Activated CD4-positive, alpha-beta T cell treated with anti-CD3 and anti-CD28 coated beads for 36 hours (primary cell): ENCODE measurements at regions of chr12 and their contacts with region 1.

Region 1: DNA sequence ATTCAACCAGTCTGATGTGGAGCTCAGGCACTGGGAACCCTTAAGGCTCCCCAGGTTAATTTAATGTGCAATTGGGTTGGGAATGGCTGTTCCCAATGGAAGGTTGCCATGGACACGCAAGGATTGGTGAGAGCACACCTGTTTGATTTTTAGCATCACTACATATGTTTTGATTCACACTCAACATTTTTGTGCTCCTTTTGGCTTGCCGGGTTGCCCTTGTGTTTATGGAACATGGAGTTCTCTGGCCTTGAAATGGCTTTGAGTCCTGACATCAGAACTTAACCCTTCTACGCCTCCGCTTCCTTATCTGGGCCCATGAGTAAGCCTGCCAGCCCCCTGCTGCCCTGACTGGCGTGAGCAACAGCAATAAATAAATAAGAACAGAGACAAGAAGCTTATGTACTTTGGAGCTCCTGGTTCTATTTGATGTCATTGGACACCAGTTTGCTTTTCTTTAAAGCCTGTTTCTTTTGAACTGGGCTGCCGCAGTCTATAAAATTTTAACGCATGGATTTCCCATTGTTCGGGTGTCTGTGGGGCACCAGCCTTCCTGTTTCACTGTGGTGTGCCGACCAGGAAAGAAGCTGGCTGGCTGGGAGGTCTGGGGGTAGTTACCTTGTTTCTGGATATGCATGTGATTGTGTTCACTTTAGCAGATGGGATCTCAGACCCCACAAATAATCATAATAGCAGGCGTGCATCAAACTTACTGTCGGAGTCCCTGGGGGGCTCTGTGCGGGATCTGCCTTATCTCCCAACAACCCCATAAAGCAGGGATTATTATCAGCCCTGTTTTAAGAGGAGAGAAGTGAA is 27.8 kb downstream of the TBX3 start:
- DNase-seq: no peak
- ATAC-seq: no peak
- H3K4me3 Mint-ChIP-seq: no peak overlapping the region
- H3K27ac Mint-ChIP-seq: no peak overlapping the region
- H3K4me1 Mint-ChIP-seq: no peaks in the 10 kb centered on the region
- H3K27me3 Mint-ChIP-seq: peaks cover 10% of the 10 kb centered on the region

Region 2: DNA sequence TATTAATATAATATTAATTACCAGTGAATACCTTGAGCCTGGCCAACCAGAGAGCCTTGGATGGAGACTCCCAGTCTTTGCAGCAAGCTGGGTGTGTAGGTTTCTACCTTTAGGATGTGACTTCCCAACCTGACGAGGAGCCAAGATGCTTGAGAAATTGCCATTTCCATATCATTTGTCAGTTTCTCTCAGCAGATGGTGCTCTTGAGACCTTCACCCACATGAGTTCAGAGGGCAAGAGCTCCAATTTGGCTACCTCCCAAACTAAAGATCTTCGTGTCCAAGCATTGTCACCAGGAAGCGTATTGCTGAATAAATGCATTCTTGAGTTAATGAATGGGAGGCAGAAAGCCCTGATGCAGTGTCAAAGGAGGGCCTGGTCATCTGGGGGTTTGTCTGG is 143.8 kb before region 1 on chr12:
- CTCF ChIA-PET with region 1: no interaction called
- POLR2A ChIA-PET with region 1: no interaction called
- intact Hi-C with region 1: no loop called
- DNase-seq: no peak
- ATAC-seq: no peak
- H3K4me3 Mint-ChIP-seq: no peak overlapping the region
- H3K27ac Mint-ChIP-seq: no peak overlapping the region
- H3K4me1 Mint-ChIP-seq: peaks cover 3% of the 10 kb centered on the region
- H3K27me3 Mint-ChIP-seq: peaks cover 8% of the 10 kb centered on the region

Region 3: DNA sequence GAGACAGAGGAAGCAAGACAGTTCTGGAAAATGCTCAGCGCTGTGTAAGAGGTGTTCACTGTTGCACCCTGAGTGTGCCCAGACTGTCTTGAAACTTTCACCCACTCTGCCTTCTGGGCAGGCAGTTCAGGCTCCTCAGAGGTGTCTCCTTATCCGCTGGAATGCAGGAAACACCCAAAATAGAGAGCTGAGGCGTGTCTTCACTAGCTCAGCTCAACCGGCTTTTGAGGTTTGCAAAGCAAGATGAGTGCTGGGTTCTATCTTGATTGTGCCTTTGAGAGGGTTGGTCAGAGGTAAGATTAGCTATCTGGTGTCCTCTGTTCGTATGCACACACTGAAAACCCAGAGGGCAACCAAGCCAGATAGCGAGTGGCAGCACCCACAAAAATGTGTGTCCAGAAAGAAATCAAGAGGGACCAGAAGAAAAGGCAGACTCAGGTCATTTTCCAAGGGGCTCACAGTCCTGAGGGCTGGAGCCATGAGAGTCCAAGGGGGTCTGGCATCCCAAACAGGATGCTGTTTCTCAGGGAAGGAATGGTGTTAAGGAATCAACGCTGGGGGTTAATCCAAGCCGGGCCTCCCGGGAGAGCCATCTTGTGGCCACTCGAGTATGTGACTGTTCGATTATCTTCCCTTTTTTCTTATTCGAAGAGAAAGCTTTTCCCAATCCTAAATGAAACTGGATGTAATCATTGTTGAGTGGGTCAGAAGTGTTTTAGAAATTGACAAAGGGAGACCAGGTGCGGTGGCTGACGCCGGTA is 19.2 kb before region 1 on chr12:
- CTCF ChIA-PET with region 1: no interaction called
- POLR2A ChIA-PET with region 1: no interaction called
- intact Hi-C with region 1: loop called in 1 of 2 experiments (anchors 1 kb)
- DNase-seq: no peak
- ATAC-seq: no peak
- H3K4me3 Mint-ChIP-seq: no peak overlapping the region
- H3K27ac Mint-ChIP-seq: no peak overlapping the region
- H3K4me1 Mint-ChIP-seq: no peaks in the 10 kb centered on the region
- H3K27me3 Mint-ChIP-seq: peaks cover 4% of the 10 kb centered on the region